Panc1 (cell line): ENCODE measurements at regions of chr20 and their contacts with region 1.

Region 1: DNA sequence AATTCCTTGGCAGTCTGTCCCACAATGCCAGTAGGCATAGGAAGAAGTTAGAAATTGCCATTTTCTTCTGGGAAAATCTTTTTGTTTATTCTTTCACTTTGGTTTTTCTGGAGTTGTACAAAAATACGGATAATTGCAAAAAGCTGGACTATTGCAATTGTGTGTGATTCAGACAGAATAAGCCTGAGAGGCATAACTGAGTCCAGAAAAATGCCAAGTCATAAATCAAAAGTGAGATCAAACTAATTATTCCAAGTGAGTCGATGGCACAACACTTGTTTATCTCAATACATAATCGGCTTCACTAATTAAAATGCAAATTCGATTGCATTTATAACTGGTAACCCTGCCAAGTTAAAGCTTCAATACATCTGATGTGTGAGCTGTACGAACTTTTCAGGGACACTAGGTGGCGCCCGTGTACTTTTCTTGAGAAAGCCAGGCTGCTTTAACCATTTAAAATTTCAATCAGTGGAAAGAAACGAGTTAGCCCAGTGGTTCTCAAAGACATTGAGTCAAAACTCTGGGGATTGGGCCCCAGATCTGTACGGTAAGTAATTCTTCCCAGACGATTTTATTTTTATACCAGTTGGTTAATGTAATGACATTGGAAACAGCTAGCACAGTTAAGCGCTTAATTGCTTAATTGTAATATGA is 102.6 kb downstream of the LAMP5 start:
- DNase-seq: peak; percentile 55
- ATAC-seq: peak; percentile 83
- H3K4me3 ChIP-seq: peak overlapping the region; percentile 17 to 45
- H3K27ac ChIP-seq: no peak overlapping the region
- H3K4me1 ChIP-seq: 0 out of 2 replicates have a peak, but pooled peaks cover 2% of the 10 kb centered on the region
- H3K27me3 ChIP-seq: no peaks in the 10 kb centered on the region
- CTCF ChIP-seq: peak; percentile 82

Region 2: DNA sequence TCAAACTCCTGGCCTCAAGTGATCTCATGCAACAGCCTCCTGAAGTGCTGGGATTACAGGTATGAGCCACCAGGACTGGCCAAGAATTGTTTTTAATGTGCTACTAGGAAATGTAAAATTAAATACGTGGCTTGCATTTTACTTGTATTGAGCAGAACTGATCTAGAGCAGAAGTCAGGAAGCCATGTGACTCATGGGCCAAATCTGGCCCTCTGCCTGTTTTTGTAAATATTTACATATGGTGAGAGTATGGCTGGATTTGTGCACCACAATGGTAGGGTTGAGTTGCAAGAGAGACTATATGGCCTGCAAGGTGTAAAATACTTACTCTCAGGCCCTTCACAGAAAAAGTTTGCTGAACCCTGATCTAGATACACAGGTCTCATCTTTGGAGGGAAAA is 26.8 kb before region 1 on chr20:
- CTCF ChIA-PET with region 1: no interaction called
- POLR2A ChIA-PET with region 1: no interaction called
- in situ Hi-C with region 1: no loop called
- intact Hi-C with region 1: no loop called
- DNase-seq: no peak
- ATAC-seq: no peak
- H3K4me3 ChIP-seq: no peak overlapping the region
- H3K27ac ChIP-seq: no peak overlapping the region
- H3K4me1 ChIP-seq: no peaks in the 10 kb centered on the region
- H3K27me3 ChIP-seq: no peaks in the 10 kb centered on the region
- CTCF ChIP-seq: no peak

Region 3: GRCh38 chr20:9945408-9945807 is 328.4 kb after region 1 on chr20:
- CTCF ChIA-PET with region 1: interaction called, 10 read pairs
- POLR2A ChIA-PET with region 1: no interaction called
- in situ Hi-C with region 1: no loop called
- intact Hi-C with region 1: no loop called
- DNase-seq: no peak
- ATAC-seq: peak; percentile 87
- H3K4me3 ChIP-seq: no peak overlapping the region
- H3K27ac ChIP-seq: no peak overlapping the region
- H3K4me1 ChIP-seq: no peaks in the 10 kb centered on the region
- H3K27me3 ChIP-seq: no peaks in the 10 kb centered on the region
- CTCF ChIP-seq: no peak

Region 4: DNA sequence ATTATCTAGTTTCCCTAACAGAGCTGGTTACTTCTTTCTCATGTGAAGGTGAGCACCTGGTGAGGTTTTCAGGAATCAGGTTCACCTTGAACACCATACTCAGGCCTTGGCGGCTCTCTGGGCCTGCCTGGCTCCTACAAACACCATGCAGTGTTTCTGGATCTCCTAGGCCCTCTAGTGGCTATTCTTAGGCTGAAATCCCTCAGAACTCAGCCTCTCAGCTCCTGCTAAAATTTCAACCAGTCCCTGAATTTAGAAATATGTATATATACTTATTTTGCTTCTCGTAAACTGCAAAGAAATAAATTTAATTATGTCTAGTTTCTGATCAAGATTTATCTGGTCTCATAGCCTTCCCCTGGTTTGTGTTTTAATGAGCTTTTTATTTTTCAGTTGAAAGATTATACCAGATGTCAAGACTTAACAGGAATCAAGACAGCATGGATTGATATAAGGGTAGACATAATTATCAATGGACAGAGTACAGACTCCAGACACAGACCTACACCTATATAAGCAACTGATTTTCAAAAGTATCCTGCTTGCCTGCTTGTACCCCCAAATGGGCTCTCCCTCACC is 473.7 kb after region 1 on chr20:
- CTCF ChIA-PET with region 1: interaction called, 8 read pairs
- POLR2A ChIA-PET with region 1: no interaction called
- in situ Hi-C with region 1: no loop called
- intact Hi-C with region 1: loop called (anchors 2 kb)
- DNase-seq: peak; percentile 48
- ATAC-seq: peak; percentile 85
- H3K4me3 ChIP-seq: no peak overlapping the region
- H3K27ac ChIP-seq: no peak overlapping the region
- H3K4me1 ChIP-seq: peaks cover 4% of the 10 kb centered on the region; the same call in 1 of the 2 replicates
- H3K27me3 ChIP-seq: no peaks in the 10 kb centered on the region
- CTCF ChIP-seq: peak; percentile 86

Region 5: DNA sequence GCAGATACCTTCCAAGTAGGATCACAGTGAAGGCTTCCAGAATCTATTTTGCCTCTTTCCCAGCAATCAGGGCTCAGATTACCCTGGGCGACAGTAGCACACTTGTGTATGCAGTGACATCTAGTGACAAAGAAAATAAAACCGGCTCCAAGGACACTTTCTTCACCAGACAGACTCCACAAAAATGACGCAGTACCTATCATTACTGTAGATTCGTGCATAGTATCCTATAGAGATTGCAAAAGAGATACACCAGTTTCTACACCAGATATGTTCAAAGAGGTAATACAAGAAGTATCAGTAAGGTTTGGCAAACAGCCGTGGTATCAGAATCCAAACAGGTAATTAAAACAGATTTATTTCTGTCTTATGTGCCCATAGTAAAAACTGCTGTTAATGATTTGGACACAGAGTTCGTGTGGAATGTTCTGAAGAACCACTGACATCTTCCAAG is 1657.2 kb after region 1 on chr20:
- CTCF ChIA-PET with region 1: no interaction called
- POLR2A ChIA-PET with region 1: no interaction called
- in situ Hi-C with region 1: no loop called
- intact Hi-C with region 1: loop called (anchors 10 kb)
- DNase-seq: peak; percentile 76
- ATAC-seq: peak; percentile 96
- H3K4me3 ChIP-seq: no peak overlapping the region
- H3K27ac ChIP-seq: peak overlapping the region; percentile 68; the same call in 1 of the 2 replicates
- H3K4me1 ChIP-seq: peaks cover 10% of the 10 kb centered on the region; the same call in 1 of the 2 replicates
- H3K27me3 ChIP-seq: no peaks in the 10 kb centered on the region
- CTCF ChIP-seq: peak; percentile 77